ENCODE measurements at regions of chr3 and their contacts with region 1.

Region 1: DNA sequence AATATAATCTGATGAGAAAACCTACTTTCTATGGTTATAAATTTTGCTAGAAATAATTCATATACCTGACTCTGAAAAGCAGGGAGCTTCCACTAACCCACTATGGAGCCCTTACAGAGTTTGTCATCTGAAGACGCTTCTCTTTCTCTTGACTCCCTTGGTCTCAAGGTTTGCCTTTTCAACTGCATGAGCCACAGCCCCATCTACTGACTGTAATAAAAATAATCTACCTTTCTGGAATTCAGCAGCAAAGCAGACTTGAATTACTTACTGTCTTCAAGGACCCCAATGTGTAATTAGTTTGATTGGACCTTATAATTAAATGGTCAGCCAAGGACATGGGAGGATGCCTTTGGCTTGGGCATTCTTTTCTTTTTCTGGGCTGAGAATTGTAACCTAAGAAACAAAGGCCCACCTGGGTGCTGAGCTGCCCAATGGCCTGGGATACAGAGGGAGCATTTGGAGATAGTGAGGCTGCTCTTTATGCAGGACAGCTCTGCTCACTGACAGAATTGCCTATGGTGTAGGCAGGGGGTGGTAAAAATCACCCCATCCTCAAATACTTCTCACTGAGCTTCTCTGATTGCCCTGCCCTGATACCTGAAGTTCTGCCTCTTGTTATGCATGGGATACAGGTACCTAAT is 178.6 kb upstream of the TRIM42 start:
- DNase-seq: no peak
- ATAC-seq: no peak

Region 2: DNA sequence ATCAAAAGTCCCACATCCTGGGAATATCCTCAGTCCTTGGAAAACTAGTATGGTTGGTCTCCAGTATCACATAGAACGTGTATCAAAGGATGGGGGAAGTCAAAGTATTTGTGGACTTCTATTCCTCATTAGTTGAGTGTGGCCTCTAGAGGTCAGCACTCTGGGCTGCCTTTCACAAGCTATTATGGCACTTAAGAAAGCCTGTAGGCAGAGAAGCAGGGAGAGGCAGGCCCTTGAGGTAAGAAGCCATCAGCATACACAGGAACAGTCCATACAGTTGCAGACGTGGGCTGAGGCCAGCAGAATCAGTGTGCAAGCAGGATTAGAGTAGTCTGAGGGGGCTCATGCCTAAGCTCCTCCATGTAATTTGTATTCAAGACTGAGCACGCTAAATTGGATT is 222.5 kb before region 1 on chr3:
- intact Hi-C with region 1: loop called (anchors 5 kb)
- DNase-seq: no peak
- ATAC-seq: no peak

Region 3: GRCh38 chr3:140363801-140364200 is 135.4 kb before region 1 on chr3:
- intact Hi-C with region 1: loop called (anchors 10 kb)
- DNase-seq: no peak
- ATAC-seq: no peak

Region 4: DNA sequence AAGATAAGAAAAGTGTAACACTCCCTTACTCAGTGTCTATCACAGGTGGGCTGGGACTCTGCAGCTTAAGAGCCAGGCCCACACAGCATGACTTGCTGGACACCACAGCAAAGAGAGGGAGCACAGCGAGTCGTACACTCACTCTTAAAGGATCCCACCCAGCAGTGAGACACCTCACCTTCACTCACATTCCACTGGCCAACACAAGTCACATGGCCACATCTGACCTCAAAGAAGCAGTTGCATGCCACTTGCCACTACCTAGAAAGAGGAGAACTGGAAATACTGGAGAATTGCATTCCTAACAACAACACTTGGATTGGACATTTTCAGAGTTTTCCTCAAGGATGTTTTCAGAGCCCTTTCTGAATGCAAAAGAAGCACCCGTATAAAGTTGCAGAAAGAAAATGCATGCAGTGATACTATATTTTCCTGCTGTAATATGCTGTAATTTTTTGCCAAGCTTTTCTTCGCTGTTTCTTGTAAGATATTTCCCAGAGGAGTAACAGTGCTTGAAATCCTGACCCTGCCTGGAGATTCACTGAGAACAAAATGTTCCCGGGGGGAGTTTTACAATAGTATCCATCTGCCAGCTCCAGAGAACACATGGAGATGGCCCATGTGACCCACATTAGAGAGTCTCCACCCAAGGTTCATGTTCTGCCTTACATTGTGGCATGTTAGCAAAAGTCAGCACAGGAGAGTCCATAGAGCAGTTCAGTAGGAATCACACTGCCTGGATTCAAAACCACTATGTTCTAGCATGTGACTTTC is 220.8 kb after region 1 on chr3:
- intact Hi-C with region 1: no loop called
- DNase-seq: no peak
- ATAC-seq: peak; percentile 94

Region 5: DNA sequence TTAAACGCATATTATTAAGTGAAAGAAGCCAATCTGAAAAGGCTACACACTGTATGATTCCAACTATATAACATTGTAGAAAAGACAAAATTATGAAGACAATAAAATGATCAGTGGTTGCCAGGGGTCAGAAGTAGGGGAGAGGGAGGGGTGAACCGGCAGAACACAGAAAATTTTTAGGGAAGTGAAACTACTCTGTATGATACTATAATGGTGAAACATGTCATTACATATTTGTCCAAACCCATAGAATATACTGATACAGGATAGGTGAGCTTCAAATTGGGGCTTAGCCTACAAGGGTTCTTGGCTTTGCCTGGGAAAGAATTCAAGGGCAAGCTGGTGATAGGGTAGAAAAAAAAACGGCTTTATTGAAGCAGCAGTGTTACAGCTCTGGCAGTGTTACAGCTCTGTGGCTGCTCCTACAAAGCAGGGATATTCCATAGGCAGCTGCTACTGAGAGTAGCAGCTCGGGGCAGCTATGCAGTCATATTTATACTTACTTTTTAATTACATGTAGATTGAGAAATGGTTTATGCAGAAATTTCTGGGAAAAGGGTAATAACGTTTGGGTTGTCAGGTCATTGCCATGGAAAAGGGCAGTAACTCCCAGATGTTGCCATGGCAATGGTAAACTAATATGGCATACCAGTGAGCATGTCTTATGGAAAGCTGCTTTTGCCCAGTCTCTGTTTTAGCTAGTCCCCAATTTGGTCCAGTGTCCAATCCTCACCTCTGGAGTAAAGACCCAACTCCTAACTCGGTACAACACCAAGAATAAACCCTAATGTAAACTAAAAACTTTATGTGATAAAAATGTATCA is 317.3 kb after region 1 on chr3:
- intact Hi-C with region 1: no loop called
- DNase-seq: no peak
- ATAC-seq: no peak